HCT116 (cell line): ENCODE measurements at regions of chrX and their contacts with region 1.

Region 1: GRCh38 chrX:68828740-68829552 is at the start of gene EFNB1:
- DNase-seq: peak; percentile 88
- ATAC-seq: peak; percentile 83
- H3K4me3 ChIP-seq: peak within 1 kb of the TSS; percentile 61 to 72
- H3K27ac ChIP-seq: peak within 1 kb of the TSS; percentile 59; the same call in 1 of the 2 replicates
- H3K4me1 ChIP-seq: peaks cover 0 to 8% of the 10 kb centered on the region in 2 experiments; a peak in 1 of 4 replicates
- H3K27me3 ChIP-seq: no peaks in the 10 kb centered on the region
- CTCF ChIP-seq: no peak
- POLR2A ChIP-seq: peak; percentile 84
- RAD21 ChIP-seq: no peak
- total RNA-seq, gene EFNB1: 14.7 TPM

Region 2: DNA sequence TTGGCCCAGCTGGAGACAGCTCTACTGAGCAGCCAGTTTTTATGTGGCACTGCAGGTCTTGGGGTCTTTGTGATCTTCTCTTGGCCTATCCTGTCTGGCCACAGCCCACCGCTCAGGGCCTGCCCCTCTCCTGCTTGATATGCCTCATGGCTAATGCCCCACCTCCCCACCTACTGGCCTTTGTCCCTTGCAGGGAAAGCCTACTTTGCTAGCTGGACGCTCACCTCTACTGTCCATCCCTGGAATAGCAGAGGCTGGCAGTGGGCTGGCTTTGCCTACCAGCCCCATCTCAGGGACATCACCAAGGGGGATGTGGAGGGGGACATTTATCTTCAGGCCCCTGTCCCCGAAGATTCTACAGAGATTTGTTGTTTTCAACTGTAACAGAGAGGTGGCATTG is 202.3 kb after region 1 on chrX:
- CTCF ChIA-PET with region 1: interaction called, 23 read pairs
- POLR2A ChIA-PET with region 1: interaction called, 25 read pairs
- RAD21 ChIA-PET with region 1: interaction called, 5 to 11 read pairs
- intact Hi-C with region 1: loop called (anchors 1 kb)
- DNase-seq: peak; percentile 10
- ATAC-seq: peak; percentile 66
- H3K4me3 ChIP-seq: no peak overlapping the region
- H3K27ac ChIP-seq: no peak overlapping the region
- H3K4me1 ChIP-seq: peaks cover 0 to 16% of the 10 kb centered on the region in 2 experiments; a peak in 2 of 4 replicates
- H3K27me3 ChIP-seq: no peaks in the 10 kb centered on the region
- CTCF ChIP-seq: peak; percentile 27 to 75 (median 30); a peak in 5 of 6 replicates
- POLR2A ChIP-seq: no peak
- RAD21 ChIP-seq: peak; percentile 70

Region 3: DNA sequence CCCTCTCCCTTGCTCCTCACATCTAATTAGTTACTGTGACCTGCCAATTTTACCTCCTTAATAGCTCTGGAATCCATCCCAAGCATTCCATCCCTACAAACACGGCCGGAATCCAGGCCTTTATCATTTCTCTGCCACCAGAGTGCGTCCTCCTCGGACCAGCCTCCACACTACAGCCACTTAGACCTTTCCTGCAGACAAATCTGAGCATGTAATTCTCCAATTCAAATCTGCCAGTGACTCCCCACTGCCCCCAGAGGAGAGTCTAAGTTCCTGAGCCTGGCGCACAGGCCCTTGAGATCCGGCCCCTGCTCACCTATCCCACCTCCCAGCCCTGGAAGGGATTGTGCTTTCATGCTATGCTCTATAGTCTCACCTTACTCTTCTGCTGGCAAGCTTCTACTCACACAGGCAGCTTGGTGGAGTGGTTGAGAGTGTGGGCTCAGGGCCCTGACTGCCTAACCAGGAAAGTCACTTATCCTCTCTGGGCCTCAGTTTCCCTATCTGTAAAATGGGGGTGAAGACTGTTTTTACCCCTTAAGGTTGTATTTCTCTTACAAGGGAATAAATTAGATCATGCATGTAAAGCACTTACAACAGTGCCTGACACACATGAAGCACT is 305.1 kb after region 1 on chrX:
- CTCF ChIA-PET with region 1: interaction called, 4 read pairs
- POLR2A ChIA-PET with region 1: interaction called, 4 read pairs
- RAD21 ChIA-PET with region 1: interaction called in 1 of 2 experiments, 3 read pairs
- intact Hi-C with region 1: loop called (anchors 5 kb)
- DNase-seq: peak; percentile 72
- ATAC-seq: peak; percentile 99
- H3K4me3 ChIP-seq: no peak overlapping the region
- H3K27ac ChIP-seq: no peak overlapping the region
- H3K4me1 ChIP-seq: 0 out of 4 replicates have a peak, but pooled peaks cover 0 to 4% of the 10 kb centered on the region in 2 experiments
- H3K27me3 ChIP-seq: no peaks in the 10 kb centered on the region
- CTCF ChIP-seq: peak; percentile 67 to 90 (median 73)
- POLR2A ChIP-seq: no peak
- RAD21 ChIP-seq: peak; percentile 69

Region 4: GRCh38 chrX:69285881-69286564 is 457.1 kb after region 1 on chrX:
- CTCF ChIA-PET with region 1: interaction called, 15 read pairs
- POLR2A ChIA-PET with region 1: interaction called, 10 read pairs
- RAD21 ChIA-PET with region 1: interaction called in 1 of 2 experiments, 7 read pairs
- intact Hi-C with region 1: loop called (anchors 1 kb)
- DNase-seq: peak; percentile 0
- ATAC-seq: peak; percentile 92
- H3K4me3 ChIP-seq: peak overlapping the region; percentile 13 to 16; a peak in 3 of 4 replicates
- H3K27ac ChIP-seq: no peak overlapping the region
- H3K4me1 ChIP-seq: no peaks in the 10 kb centered on the region; a peak in 1 of 4 replicates
- H3K27me3 ChIP-seq: no peaks in the 10 kb centered on the region
- CTCF ChIP-seq: peak; percentile 59 to 79 (median 74); a peak in 5 of 6 replicates
- POLR2A ChIP-seq: no peak
- RAD21 ChIP-seq: peak; percentile 85

Region 5: GRCh38 chrX:69615779-69616456 is 787.0 kb after region 1 on chrX and contains the start of gene EDA:
- CTCF ChIA-PET with region 1: no interaction called
- POLR2A ChIA-PET with region 1: no interaction called
- RAD21 ChIA-PET with region 1: no interaction called
- intact Hi-C with region 1: loop called (anchors 10 kb)
- DNase-seq: peak; percentile 61
- ATAC-seq: peak; percentile 96
- H3K4me3 ChIP-seq: peak within 1 kb of the TSS; percentile 54 to 61
- H3K27ac ChIP-seq: no peak within 1 kb of the TSS; the same call in 1 of the 2 replicates
- H3K4me1 ChIP-seq: peaks cover 0 to 3% of the 10 kb centered on the region in 2 experiments; a peak in 1 of 4 replicates
- H3K27me3 ChIP-seq: no peaks in the 10 kb centered on the region
- CTCF ChIP-seq: no peak
- POLR2A ChIP-seq: no peak
- RAD21 ChIP-seq: no peak
- total RNA-seq, gene EDA: 5.2 TPM